ENCODE measurements at regions of chr17 and their contacts with region 1.

Region 1: GRCh38 chr17:5419356-5419958 is at the start of gene NUP88:
- DNase-seq: peak; percentile 87 to 98 (median 92)
- ATAC-seq: peak; percentile 86
- H3K4me3 ChIP-seq: peak within 1 kb of the TSS; percentile 76
- H3K4me3 Mint-ChIP-seq: peak within 1 kb of the TSS; percentile 93
- H3K27ac ChIP-seq: peak within 1 kb of the TSS; percentile 98 to 99
- H3K27ac Mint-ChIP-seq: peak within 1 kb of the TSS; percentile 98
- H3K4me1 ChIP-seq: peaks cover 31% of the 10 kb centered on the region
- H3K4me1 Mint-ChIP-seq: peaks cover 59% of the 10 kb centered on the region
- H3K27me3 ChIP-seq: no peaks in the 10 kb centered on the region
- H3K27me3 Mint-ChIP-seq: no peaks in the 10 kb centered on the region
- CTCF ChIP-seq: no peak
- total RNA-seq, gene NUP88: 129 to 142 TPM

Region 2: DNA sequence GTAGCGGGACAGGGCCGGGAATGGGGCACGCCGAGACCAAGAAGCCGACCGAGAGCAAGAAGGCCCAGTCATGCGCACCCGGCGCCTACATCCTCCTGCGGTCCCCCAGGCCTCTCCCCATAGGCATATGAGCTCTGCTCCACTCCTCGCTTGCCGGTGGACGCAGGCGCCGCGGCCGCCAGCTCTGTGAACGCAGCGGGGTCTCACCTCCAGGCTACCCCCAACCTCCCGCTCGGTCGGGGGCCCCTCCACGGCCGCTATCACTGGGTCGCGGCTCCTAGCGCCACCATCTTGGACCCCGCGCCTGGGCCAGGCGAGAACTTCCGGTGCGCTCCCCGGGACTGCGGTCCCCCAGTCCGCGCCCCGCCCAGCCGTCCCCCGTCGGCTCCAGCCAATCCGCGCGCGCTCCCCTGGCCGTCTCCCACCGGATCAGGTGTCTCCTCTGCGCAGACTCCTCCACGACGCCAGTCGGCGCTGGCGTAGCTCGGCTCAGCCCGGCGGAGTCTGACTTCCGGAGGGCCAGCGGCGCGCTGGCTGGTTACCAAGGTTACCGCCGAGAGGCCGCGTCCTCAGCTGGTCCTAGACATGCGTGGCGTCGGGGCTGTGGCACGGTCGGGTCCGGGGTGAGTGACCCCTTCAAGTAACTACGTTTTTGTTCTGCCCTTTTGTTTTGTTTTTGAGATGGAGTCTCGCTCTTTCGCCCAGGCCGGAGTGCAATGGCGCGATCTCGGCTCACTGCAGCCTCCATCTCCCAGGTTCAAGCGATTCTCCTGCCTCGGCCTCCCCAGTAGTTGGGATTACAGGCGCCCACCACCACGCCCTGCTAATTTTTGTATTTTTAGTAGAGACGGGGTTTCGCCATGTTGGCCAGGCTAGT is 227.7 kb before region 1 on chr17 and contains the start of gene ZNF594:
- CTCF ChIA-PET with region 1: interaction called, 4 read pairs
- POLR2A ChIA-PET with region 1: interaction called, 13 read pairs
- intact Hi-C with region 1: loop called in 1 of 2 experiments (anchors 5 kb)
- DNase-seq: peak; percentile 94 to 98 (median 96)
- ATAC-seq: peak; percentile 99
- H3K4me3 ChIP-seq: peak within 1 kb of the TSS; percentile 97
- H3K4me3 Mint-ChIP-seq: peak within 1 kb of the TSS; percentile 95
- H3K27ac ChIP-seq: peak within 1 kb of the TSS; percentile 51 to 81
- H3K27ac Mint-ChIP-seq: peak within 1 kb of the TSS; percentile 88
- H3K4me1 ChIP-seq: peaks cover 23% of the 10 kb centered on the region
- H3K4me1 Mint-ChIP-seq: peaks cover 33% of the 10 kb centered on the region
- H3K27me3 ChIP-seq: no peaks in the 10 kb centered on the region
- H3K27me3 Mint-ChIP-seq: no peaks in the 10 kb centered on the region
- CTCF ChIP-seq: peak; percentile 80
- total RNA-seq, gene ZNF594: 2.2 to 3.1 TPM

Region 3: DNA sequence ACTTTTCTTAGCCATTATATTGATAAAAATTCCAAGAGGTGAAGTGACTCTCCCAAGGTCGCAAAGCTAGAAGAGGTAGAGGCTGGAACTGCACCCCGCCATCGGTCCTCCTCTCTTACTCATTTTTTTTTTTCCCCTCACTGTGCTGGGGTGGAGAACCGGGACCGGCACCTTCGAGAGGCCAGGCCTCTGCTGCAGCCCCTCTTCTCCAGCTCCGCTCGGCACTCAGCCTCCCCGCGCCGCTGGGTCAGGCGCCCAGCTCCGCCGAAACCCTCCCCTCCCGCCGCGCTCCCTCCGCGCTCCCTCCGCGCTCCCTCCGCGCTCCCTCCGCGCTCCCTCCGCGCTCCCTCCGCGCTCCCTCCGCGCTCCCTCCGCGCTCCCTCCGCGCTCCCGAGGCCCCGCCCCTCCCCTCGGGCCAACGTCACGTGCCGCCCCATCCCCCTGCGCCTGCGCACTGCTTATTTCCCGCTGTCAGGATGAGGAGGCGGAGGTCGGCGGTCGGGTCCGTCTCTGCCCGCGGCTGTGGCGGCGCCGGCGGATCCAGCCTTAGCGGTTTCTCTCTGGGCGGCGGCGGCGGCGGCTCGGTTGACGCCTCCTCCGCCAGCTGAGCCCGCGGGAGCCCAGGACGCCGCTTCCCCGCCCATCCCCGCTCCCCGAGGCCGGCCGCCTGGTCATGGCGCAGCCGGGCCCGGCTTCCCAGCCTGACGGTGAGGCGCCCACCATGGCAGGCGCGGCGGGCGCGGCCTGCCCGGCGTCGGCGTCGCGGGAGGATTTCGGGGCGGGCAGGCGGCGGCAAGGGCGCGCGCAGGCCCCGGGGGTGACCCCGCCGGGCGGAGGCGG is 137.4 kb before region 1 on chr17 and contains the start of gene RABEP1:
- CTCF ChIA-PET with region 1: no interaction called
- POLR2A ChIA-PET with region 1: interaction called, 5 read pairs
- intact Hi-C with region 1: loop called in 1 of 2 experiments (anchors 5 kb)
- DNase-seq: peak; percentile 89 to 97 (median 94)
- ATAC-seq: peak; percentile 80
- H3K4me3 ChIP-seq: peak within 1 kb of the TSS; percentile 76
- H3K4me3 Mint-ChIP-seq: peak within 1 kb of the TSS; percentile 97
- H3K27ac ChIP-seq: peak within 1 kb of the TSS in 1 of 2 donors; percentile 64
- H3K27ac Mint-ChIP-seq: peak within 1 kb of the TSS; percentile 91
- H3K4me1 ChIP-seq: peaks cover 26% of the 10 kb centered on the region
- H3K4me1 Mint-ChIP-seq: peaks cover 40% of the 10 kb centered on the region
- H3K27me3 ChIP-seq: no peaks in the 10 kb centered on the region
- H3K27me3 Mint-ChIP-seq: no peaks in the 10 kb centered on the region
- CTCF ChIP-seq: peak; percentile 43
- total RNA-seq, gene RABEP1: 27.4 to 31.8 TPM

Region 4: GRCh38 chr17:5468075-5468473 is 48.6 kb after region 1 on chr17:
- CTCF ChIA-PET with region 1: no interaction called
- POLR2A ChIA-PET with region 1: interaction called, 4 read pairs
- intact Hi-C with region 1: loop called in 1 of 2 experiments (anchors 2 kb)
- DNase-seq: peak in 3 of 14 experiments; percentile 1 to 38 (median 37)
- ATAC-seq: peak; percentile 39
- H3K4me3 ChIP-seq: peak overlapping the region; percentile 86
- H3K4me3 Mint-ChIP-seq: peak overlapping the region; percentile 69
- H3K27ac ChIP-seq: no peak overlapping the region
- H3K27ac Mint-ChIP-seq: peak overlapping the region; percentile 0
- H3K4me1 ChIP-seq: peaks cover 24% of the 10 kb centered on the region
- H3K4me1 Mint-ChIP-seq: peaks cover 43% of the 10 kb centered on the region
- H3K27me3 ChIP-seq: no peaks in the 10 kb centered on the region
- H3K27me3 Mint-ChIP-seq: no peaks in the 10 kb centered on the region
- CTCF ChIP-seq: no peak

Region 5: DNA sequence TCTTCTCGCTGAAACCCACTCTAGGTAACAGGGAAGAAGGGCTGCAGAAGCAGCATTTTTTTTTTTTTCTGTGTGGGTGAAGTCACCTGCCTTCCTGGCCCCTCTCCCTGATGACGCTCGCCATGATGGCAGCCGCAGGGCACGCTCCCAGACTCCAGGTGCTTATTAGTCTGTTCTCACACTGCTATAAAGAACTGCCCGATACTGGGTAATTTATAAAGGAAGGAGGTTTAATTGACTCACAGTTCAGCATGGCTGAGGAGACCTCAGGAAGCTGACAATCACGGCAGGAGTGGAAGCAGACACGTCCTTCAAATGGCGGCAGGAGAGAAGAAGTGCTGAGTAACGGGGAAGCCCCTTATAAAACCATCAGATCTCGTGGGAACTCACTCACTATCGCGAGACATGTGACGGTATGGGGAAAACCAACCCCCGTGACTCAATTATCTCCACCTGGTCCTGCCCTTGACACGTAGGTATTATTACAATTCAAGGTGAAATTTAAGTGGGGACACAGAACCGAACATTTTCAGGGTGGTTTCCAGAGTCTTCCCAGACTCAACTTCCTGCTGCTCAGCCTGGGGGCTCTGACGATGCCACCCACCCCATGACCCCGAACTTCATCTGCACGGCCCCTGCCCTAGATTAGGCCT is 199.8 kb after region 1 on chr17:
- CTCF ChIA-PET with region 1: no interaction called
- POLR2A ChIA-PET with region 1: no interaction called
- intact Hi-C with region 1: no loop called
- DNase-seq: peak in 2 of 14 experiments; percentile 9 to 35
- ATAC-seq: no peak
- H3K4me3 ChIP-seq: no peak overlapping the region
- H3K4me3 Mint-ChIP-seq: no peak overlapping the region
- H3K27ac ChIP-seq: no peak overlapping the region
- H3K27ac Mint-ChIP-seq: no peak overlapping the region
- H3K4me1 ChIP-seq: no peaks in the 10 kb centered on the region
- H3K4me1 Mint-ChIP-seq: no peaks in the 10 kb centered on the region
- H3K27me3 ChIP-seq: peaks cover 17 to 23% of the 10 kb centered on the region in 2 experiments
- H3K27me3 Mint-ChIP-seq: peaks cover 43% of the 10 kb centered on the region
- CTCF ChIP-seq: no peak

Region 6: DNA sequence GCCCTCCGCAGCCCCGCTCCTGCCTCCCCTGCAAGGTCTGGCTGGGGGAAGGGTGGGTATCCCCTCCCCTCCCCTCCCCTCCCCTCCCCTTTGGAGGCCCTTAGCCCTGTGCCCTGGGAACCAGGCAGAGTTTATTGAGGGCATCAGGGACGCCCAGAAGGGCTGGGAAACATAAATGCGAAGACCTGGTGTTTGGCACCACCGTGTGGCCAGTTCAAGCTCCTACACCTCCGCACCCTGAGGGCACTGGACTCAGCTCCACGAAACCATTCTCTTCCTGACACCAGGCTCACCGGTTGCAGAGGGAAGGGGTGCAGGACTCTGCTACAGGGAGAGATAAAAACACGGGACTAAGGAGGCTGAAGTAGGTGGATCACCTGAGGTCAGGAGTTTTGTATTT is 1016.5 kb after region 1 on chr17:
- CTCF ChIA-PET with region 1: no interaction called
- POLR2A ChIA-PET with region 1: no interaction called
- intact Hi-C with region 1: loop called in 1 of 2 experiments (anchors 5 kb)
- DNase-seq: peak; percentile 42 to 83 (median 55)
- ATAC-seq: peak; percentile 99
- H3K4me3 ChIP-seq: no peak overlapping the region
- H3K4me3 Mint-ChIP-seq: no peak overlapping the region
- H3K27ac ChIP-seq: no peak overlapping the region
- H3K27ac Mint-ChIP-seq: no peak overlapping the region
- H3K4me1 ChIP-seq: peaks cover 3% of the 10 kb centered on the region
- H3K4me1 Mint-ChIP-seq: peaks cover 5% of the 10 kb centered on the region
- H3K27me3 ChIP-seq: peaks cover 5 to 11% of the 10 kb centered on the region in 2 experiments
- H3K27me3 Mint-ChIP-seq: peaks cover 37% of the 10 kb centered on the region
- CTCF ChIP-seq: peak; percentile 77